Activated naive CD4-positive, alpha-beta T cell treated with anti-CD3 and anti-CD28 coated beads, Interleukin-2, amount 10 ng/mL, durations not matched to agents 7 days and 5 days (primary cell): ENCODE measurements at regions of chr6 and their contacts with region 1.

Region 1: GRCh38 chr6:43228951-43229802 is at the start of gene DNPH1:
- DNase-seq: peak; percentile 83
- H3K4me3 Mint-ChIP-seq: peak within 1 kb of the TSS; percentile 84
- H3K27ac Mint-ChIP-seq: peak within 1 kb of the TSS; percentile 84
- H3K4me1 Mint-ChIP-seq: peaks cover 46% of the 10 kb centered on the region
- H3K27me3 Mint-ChIP-seq: peaks cover 31% of the 10 kb centered on the region

Region 2: GRCh38 chr6:43181942-43182860 is 47.0 kb before region 1 on chr6 and contains the start of gene CUL9:
- CTCF ChIA-PET with region 1: no interaction called
- DNase-seq: peak; percentile 91
- H3K4me3 Mint-ChIP-seq: peak within 1 kb of the TSS; percentile 97
- H3K27ac Mint-ChIP-seq: peak within 1 kb of the TSS; percentile 70
- H3K4me1 Mint-ChIP-seq: peaks cover 51% of the 10 kb centered on the region
- H3K27me3 Mint-ChIP-seq: no peaks in the 10 kb centered on the region

Region 3: GRCh38 chr6:43247113-43247999 is 18.2 kb after region 1 on chr6:
- CTCF ChIA-PET with region 1: interaction called, 11 read pairs
- DNase-seq: peak; percentile 89
- H3K4me3 Mint-ChIP-seq: peak overlapping the region; percentile 75
- H3K27ac Mint-ChIP-seq: peak overlapping the region; percentile 71
- H3K4me1 Mint-ChIP-seq: peaks cover 30% of the 10 kb centered on the region
- H3K27me3 Mint-ChIP-seq: peaks cover 27% of the 10 kb centered on the region

Region 4: GRCh38 chr6:43347021-43347420 is 117.8 kb after region 1 on chr6:
- CTCF ChIA-PET with region 1: no interaction called
- DNase-seq: no peak
- H3K4me3 Mint-ChIP-seq: no peak overlapping the region
- H3K27ac Mint-ChIP-seq: no peak overlapping the region
- H3K4me1 Mint-ChIP-seq: no peaks in the 10 kb centered on the region
- H3K27me3 Mint-ChIP-seq: no peaks in the 10 kb centered on the region

Region 5: GRCh38 chr6:43402820-43403219 is 173.6 kb after region 1 on chr6:
- CTCF ChIA-PET with region 1: interaction called, 10 read pairs
- DNase-seq: no peak
- H3K4me3 Mint-ChIP-seq: no peak overlapping the region
- H3K27ac Mint-ChIP-seq: no peak overlapping the region
- H3K4me1 Mint-ChIP-seq: no peaks in the 10 kb centered on the region
- H3K27me3 Mint-ChIP-seq: peaks cover 43% of the 10 kb centered on the region